Activated T-helper 2 cell treated with anti-CD3 and anti-CD28 coated beads, Interferon-gamma antibody, Interleukin-2, Interleukin-4, amounts not matched to agents 10 μg/mL and 5 μg/mL and 100 μg/mL, durations not matched to agents 14 hours and 24 hours and 36 hours (primary cell): ENCODE measurements at regions of chr3 and their contacts with region 1.

Region 1: GRCh38 chr3:141412087-141412935 is 44.0 kb downstream of the ZBTB38 start:
- DNase-seq: peak; percentile 57
- H3K4me3 Mint-ChIP-seq: peak overlapping the region; percentile 76
- H3K27ac Mint-ChIP-seq: peak overlapping the region; percentile 98
- H3K4me1 Mint-ChIP-seq: peaks cover 64% of the 10 kb centered on the region
- H3K27me3 Mint-ChIP-seq: no peaks in the 10 kb centered on the region

Region 2: GRCh38 chr3:140941434-140942220 is 470.7 kb before region 1 on chr3 and contains the start of gene SLC25A36:
- intact Hi-C with region 1: loop called (anchors 10 kb)
- DNase-seq: peak; percentile 94
- H3K4me3 Mint-ChIP-seq: peak within 1 kb of the TSS; percentile 91
- H3K27ac Mint-ChIP-seq: peak within 1 kb of the TSS; percentile 96
- H3K4me1 Mint-ChIP-seq: peaks cover 34% of the 10 kb centered on the region
- H3K27me3 Mint-ChIP-seq: peaks cover 13% of the 10 kb centered on the region
- total RNA-seq, gene SLC25A36: 69.5 and 71.8 TPM in 2 replicates

Region 3: DNA sequence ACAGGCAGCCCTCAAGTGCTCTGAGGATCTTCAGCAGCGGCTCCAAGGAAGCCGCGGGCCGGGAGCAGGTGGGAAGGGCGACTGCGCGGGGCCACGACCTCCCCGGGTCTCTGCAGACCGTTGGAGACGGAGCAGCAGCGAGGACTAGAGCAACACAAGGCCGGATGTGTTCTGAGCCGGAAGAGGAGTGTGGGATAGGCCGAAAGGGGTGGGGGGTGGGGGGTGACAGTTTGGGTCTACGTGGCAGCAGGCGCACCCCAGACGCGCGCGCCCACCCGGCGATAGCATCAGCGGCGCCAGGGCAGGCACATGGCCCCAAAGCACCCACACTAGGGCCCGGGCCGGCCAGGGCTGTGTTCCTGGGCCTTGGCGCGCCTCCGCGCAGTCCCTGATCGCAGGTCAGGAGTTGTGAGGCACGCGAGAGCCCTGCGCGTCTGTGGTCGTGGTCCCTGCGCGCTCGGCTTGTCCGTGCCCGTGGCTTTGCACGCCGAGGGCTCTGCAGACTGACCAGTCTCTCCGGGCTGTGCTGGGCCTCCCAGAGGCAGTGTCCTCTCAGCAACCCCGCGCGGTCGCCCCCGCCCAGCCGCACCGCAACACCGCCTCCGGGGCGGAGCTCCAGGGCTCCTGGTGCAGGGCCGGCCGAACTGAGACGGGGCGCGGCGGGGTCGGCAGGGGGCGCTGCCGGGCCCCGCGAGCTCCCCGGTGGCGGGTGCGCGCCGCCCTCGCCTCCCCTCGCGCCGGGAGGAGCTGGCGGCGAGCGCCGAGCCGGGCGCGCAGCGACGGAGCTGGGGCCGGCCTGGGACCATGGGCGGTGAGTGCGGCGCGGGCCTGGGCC is 181.0 kb before region 1 on chr3 and contains the start of gene PXYLP1:
- intact Hi-C with region 1: loop called (anchors 5 kb)
- DNase-seq: peak; percentile 90
- H3K4me3 Mint-ChIP-seq: peak within 1 kb of the TSS; percentile 97
- H3K27ac Mint-ChIP-seq: peak within 1 kb of the TSS; percentile 93
- H3K4me1 Mint-ChIP-seq: peaks cover 57% of the 10 kb centered on the region
- H3K27me3 Mint-ChIP-seq: no peaks in the 10 kb centered on the region
- total RNA-seq, gene PXYLP1: 57.2 and 66.0 TPM in 2 replicates

Region 4: GRCh38 chr3:141370065-141370533 is 42.2 kb before region 1 on chr3:
- intact Hi-C with region 1: loop called (anchors 2 kb)
- DNase-seq: peak; percentile 58
- H3K4me3 Mint-ChIP-seq: no peak overlapping the region
- H3K27ac Mint-ChIP-seq: peak overlapping the region; percentile 40
- H3K4me1 Mint-ChIP-seq: peaks cover 27% of the 10 kb centered on the region
- H3K27me3 Mint-ChIP-seq: no peaks in the 10 kb centered on the region

Region 5: DNA sequence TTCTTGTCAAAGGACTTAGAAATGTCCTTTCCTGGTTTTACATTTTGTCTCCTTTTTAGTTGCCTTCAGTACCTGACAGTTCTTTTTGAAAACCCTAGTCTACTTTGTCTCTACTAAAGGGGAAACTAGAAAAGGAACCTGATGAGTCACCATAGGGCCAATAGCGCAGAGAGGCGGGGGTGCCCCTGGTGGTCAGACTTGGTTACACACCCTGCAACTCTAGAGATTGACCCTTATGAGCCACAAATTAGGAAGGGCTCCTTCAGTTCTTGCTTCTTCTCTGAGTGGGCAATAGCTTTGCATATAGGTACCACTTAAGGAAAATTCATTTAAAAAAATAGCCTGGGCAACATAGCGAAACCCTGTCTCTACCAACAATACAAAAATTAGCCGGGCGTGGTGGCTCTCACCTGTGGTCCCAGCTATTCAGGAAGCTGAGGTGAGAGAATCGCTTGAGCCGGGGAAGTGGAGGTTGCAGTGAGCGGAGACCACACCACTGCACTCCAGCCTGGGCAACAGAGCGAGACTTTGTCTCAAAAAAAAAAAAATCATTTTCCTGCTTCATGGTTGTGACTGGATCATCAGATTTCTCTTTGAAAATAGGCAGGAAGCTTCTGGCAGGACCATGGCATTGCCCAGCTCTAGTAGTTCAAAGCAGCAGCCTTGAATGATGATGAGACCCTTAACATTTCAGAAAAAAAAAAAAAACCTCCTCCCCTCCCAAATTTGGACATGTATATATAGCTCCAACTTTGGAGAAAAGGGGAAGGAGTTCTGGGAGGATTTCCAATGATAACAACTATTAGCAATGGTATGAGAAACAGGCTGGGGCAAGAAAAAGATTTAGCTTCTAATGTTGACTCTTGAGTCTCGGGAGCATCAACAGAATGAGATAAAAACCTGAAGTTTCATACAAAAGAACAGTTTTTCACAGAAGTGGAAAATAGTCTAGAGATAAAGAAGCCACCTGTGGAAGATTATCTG is 29.4 kb after region 1 on chr3:
- intact Hi-C with region 1: loop called (anchors 1 kb)
- DNase-seq: peak; percentile 50
- H3K4me3 Mint-ChIP-seq: no peak overlapping the region
- H3K27ac Mint-ChIP-seq: no peak overlapping the region
- H3K4me1 Mint-ChIP-seq: peaks cover 16% of the 10 kb centered on the region
- H3K27me3 Mint-ChIP-seq: no peaks in the 10 kb centered on the region

Region 6: GRCh38 chr3:141498598-141499223 is 86.4 kb after region 1 on chr3:
- intact Hi-C with region 1: loop called (anchors 2 kb)
- DNase-seq: peak; percentile 90
- H3K4me3 Mint-ChIP-seq: peak overlapping the region; percentile 43
- H3K27ac Mint-ChIP-seq: peak overlapping the region; percentile 82
- H3K4me1 Mint-ChIP-seq: peaks cover 66% of the 10 kb centered on the region
- H3K27me3 Mint-ChIP-seq: no peaks in the 10 kb centered on the region